OCI-LY7 (cell line): ENCODE measurements at regions of chr18 and their contacts with region 1.

Region 1: DNA sequence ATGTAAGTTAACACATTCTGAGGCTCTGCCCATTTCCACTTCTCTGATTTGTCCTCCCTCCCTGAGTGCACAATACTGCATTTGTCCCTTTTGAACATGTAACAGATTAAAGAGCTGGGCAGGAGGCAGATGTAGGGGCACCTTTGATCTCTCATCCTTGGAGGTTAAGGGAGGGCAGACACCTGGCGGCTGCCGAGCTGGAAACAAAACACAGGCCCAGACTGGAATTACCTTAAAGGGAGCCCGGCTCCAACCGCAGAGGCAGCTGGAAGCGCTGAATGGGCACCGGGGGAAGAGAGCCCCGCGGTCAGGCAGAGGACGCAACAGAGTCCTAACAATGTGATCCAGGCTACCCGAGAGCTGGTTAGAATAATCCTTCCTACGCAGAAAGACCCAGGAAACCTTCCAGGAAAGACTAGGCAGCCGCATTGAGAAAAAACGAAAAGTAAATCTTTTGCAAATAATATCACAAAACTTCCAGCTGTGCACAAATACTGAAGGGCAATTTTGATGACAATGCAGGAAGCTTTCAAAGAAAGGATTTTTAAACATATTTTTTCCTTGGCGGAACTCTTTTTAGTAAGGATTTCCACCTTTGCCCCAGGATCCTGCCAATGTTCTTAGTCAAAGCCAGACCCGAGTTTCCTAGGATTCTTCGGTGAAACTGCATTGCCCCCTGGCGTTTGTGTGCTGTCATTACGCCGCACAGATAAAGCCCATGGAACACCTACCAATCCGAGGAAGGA is 216.0 kb downstream of the TGIF1 start:
- DNase-seq: peak; percentile 91
- H3K4me3 ChIP-seq: peak overlapping the region; percentile 58
- H3K27ac ChIP-seq: peak overlapping the region; percentile 78
- H3K4me1 ChIP-seq: peaks cover 52% of the 10 kb centered on the region
- CTCF ChIP-seq: peak; percentile 99

Region 2: DNA sequence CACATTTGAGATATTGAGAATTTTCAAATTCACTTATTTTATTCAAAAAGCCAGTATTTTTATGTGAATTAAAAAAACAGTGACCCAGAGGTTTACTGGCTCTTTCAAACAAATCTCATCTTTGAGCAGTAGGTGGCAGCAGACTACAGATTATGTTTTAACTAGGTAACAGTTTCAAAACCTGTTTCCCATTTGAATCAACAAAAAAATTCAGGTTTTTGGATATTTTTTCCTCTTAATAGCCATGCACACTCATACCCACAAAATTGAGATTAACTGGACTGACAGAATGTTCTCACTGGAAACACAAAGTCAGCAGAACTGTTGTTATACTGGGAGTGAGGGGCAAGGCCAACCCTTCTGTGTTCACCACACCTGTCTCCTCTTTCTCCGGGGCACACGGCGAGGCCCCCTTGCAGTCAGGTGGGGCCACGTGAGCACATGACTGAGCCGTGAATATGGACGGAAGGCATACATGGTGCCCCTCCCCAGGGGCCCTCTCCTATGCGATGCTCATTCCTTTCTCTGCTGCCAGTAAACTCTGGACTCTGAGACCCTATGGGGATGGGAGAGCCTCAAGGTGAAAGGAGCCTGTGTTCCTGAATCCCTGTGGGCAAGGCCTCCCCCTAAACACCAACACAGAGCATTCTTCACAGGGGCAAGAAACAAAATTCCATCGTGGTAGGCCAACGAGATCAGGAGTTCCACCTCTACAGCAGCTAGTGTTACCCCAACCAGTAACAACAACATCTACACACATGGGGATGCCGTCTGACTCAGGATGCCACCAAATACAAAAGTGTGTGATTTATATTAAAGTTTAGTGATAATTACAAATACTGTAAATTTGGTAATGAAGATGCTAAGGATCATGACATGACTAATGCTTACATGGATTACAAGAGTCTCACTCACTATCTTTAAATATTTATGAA is 733.4 kb before region 1 on chr18:
- CTCF ChIA-PET with region 1: no interaction called
- POLR2A ChIA-PET with region 1: no interaction called
- intact Hi-C with region 1: loop called (anchors 10 kb)
- DNase-seq: peak; percentile 81
- H3K4me3 ChIP-seq: no peak overlapping the region
- H3K27ac ChIP-seq: no peak overlapping the region
- H3K4me1 ChIP-seq: peaks cover 6% of the 10 kb centered on the region
- CTCF ChIP-seq: peak; percentile 99

Region 3: DNA sequence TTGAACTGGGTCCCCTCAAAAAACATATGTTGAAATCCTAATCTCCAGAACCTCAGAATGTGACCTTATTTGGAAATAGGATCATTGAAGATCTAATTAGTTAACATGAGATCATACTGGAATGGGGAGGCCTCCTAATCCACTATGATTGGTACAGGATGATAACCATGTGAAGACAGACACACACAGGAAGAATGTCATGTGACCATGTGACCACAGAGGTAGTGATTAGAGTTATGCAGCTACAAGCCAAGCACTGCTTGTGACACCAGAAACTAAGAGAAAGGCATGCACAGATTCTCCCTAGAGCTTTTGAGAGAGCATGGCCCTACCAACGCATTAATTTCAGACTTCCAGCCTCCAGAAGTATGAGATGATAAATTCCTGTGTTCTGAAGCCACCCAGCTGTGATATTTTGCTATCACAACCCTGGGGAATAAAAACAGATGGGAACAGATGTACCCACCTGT is 262.9 kb before region 1 on chr18:
- CTCF ChIA-PET with region 1: no interaction called
- POLR2A ChIA-PET with region 1: no interaction called
- intact Hi-C with region 1: loop called (anchors 5 kb)
- DNase-seq: peak; percentile 68
- H3K4me3 ChIP-seq: peak overlapping the region; percentile 19
- H3K27ac ChIP-seq: peak overlapping the region; percentile 84
- H3K4me1 ChIP-seq: peaks cover 44% of the 10 kb centered on the region
- CTCF ChIP-seq: no peak

Region 4: DNA sequence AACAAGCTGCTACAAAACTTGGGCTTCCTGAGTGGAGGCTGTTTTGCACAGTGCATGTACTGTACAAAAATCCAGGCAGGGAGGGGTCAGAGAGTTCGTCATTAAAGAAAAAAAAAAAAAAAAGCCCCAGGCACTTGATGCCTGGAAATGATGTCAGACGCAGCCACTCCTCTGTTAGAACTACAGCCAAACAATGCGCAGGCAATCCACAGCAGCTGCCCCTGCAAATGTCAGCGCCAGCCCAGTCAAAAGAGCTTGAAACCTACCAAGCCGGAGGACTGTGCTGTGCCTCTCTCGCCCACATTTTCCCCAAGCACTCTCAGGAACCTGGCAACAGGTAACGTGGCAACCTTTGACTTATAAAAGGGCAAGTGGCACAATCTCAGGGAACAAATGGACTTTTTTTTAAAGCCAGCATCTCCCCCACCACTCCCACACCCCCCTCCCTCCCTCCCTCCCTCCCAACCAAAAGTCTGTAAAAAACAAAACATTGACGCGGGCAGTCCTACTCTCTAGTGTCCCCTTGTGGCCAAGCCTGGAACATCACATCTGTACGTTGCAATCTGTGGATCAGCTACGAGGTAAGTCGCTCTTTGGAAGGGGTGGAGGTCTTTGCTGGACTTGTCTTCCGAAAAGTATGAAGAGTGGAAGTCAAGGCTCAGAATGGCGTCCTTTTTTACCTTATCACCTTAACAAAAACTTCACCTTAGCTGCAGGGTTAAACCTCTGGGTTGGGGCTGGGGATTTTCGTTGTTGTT is 71.9 kb before region 1 on chr18:
- CTCF ChIA-PET with region 1: interaction called, 10 read pairs
- POLR2A ChIA-PET with region 1: interaction called, 28 read pairs
- intact Hi-C with region 1: loop called (anchors 1 kb)
- DNase-seq: peak; percentile 97
- H3K4me3 ChIP-seq: peak overlapping the region; percentile 79
- H3K27ac ChIP-seq: peak overlapping the region; percentile 95
- H3K4me1 ChIP-seq: peaks cover 80% of the 10 kb centered on the region
- CTCF ChIP-seq: peak; percentile 79

Region 5: DNA sequence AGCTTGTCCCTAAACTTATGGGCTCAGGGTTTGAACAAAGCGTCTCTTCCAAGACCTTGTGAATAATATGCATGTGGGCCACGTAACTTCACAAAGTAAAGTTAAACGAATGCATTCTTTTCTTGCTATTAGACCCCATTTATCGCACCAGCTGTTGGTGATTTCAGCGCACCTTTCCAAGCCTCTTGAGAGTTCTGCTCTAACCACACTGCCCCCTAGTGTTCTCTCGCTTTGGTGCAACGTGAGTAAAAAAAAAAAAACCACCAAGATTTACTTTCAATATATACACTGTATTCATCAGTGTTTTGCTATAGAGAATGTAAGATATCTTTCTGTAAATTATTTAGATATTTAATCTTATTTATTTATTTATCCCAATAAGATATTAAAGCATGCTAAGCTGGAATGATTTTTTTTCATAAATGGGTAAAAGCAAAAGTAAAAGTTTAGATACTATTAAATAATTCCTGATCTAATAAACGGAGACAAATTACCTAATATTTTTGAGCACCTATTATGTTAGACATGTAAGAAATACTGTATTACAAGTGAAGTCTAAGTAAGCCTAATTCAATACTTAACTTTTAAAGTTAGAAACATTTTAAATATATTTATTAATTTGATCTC is 329.6 kb after region 1 on chr18:
- CTCF ChIA-PET with region 1: no interaction called
- POLR2A ChIA-PET with region 1: no interaction called
- intact Hi-C with region 1: loop called (anchors 1 kb)
- DNase-seq: peak; percentile 85
- H3K4me3 ChIP-seq: no peak overlapping the region
- H3K27ac ChIP-seq: no peak overlapping the region
- H3K4me1 ChIP-seq: peaks cover 5% of the 10 kb centered on the region
- CTCF ChIP-seq: peak; percentile 97